Posterior vena cava (tissue), 2 donors: ENCODE measurements at regions of chr3 and their contacts with region 1.

Region 1: GRCh38 chr3:172749221-172749965 is 1.1 kb upstream of the ECT2 start:
- DNase-seq: no peak

Region 2: DNA sequence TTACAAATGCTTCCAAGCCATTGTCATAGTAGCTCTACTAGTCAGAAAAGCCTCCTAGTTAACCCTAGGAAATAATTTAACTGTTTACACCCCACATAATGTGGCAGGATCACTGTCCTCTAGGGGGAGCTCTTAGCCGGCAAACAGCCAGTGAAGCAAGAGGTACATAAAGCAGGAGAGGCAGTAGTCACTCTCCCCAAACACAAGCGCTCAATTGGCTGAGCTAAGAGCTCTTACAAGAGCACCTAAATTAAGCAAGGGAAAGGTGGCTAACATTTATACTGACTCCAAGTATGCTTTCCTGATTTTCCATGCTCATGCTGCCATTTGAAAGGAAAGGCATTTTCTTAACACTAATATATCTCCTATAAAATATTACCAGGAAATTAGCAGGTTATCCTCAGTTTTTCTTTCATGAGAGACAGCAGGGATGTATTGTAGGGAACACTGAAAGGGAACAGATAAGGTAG is 76.1 kb before region 1 on chr3:
- intact Hi-C with region 1: loop called in 1 of 2 experiments (anchors 10 kb)
- DNase-seq: no peak